ENCODE measurements at regions of chr19 and their contacts with region 1.

Region 1: GRCh38 chr19:2578901-2579677 is 103.2 kb downstream of the GADD45B start:
- DNase-seq: peak; percentile 87
- H3K4me3 Mint-ChIP-seq: peak overlapping the region; percentile 60
- H3K27ac Mint-ChIP-seq: peak overlapping the region; percentile 23
- H3K4me1 Mint-ChIP-seq: peaks cover 22% of the 10 kb centered on the region
- H3K27me3 Mint-ChIP-seq: peaks cover 4% of the 10 kb centered on the region
- CTCF ChIP-seq: peak; percentile 78

Region 2: GRCh38 chr19:2294611-2295335 is 284.3 kb before region 1 on chr19:
- CTCF ChIA-PET with region 1: no interaction called
- intact Hi-C with region 1: no loop called
- DNase-seq: no peak
- H3K4me3 Mint-ChIP-seq: no peak overlapping the region
- H3K27ac Mint-ChIP-seq: no peak overlapping the region
- H3K4me1 Mint-ChIP-seq: no peaks in the 10 kb centered on the region
- H3K27me3 Mint-ChIP-seq: peaks cover 40% of the 10 kb centered on the region
- CTCF ChIP-seq: no peak

Region 3: GRCh38 chr19:2475702-2476450 is 103.2 kb before region 1 on chr19 and contains the start of gene GADD45B:
- CTCF ChIA-PET with region 1: interaction called, 61 read pairs
- intact Hi-C with region 1: loop called (anchors 1 kb)
- DNase-seq: peak; percentile 95
- H3K4me3 Mint-ChIP-seq: peak within 1 kb of the TSS; percentile 95
- H3K27ac Mint-ChIP-seq: peak within 1 kb of the TSS; percentile 93
- H3K4me1 Mint-ChIP-seq: peaks cover 9% of the 10 kb centered on the region
- H3K27me3 Mint-ChIP-seq: peaks cover 11% of the 10 kb centered on the region
- CTCF ChIP-seq: no peak
- total RNA-seq, gene GADD45B: 26.3 and 36.5 TPM in 2 replicates

Region 4: GRCh38 chr19:2543463-2544442 is 35.3 kb before region 1 on chr19:
- CTCF ChIA-PET with region 1: interaction called, 12 read pairs
- intact Hi-C with region 1: loop called (anchors 5 kb)
- DNase-seq: peak; percentile 88
- H3K4me3 Mint-ChIP-seq: peak overlapping the region; percentile 16
- H3K27ac Mint-ChIP-seq: peak overlapping the region; percentile 80
- H3K4me1 Mint-ChIP-seq: peaks cover 37% of the 10 kb centered on the region
- H3K27me3 Mint-ChIP-seq: no peaks in the 10 kb centered on the region
- CTCF ChIP-seq: no peak

Region 5: GRCh38 chr19:2610637-2611482 is 31.8 kb after region 1 on chr19:
- CTCF ChIA-PET with region 1: interaction called, 14 read pairs
- intact Hi-C with region 1: loop called (anchors 1 kb)
- DNase-seq: peak; percentile 93
- H3K4me3 Mint-ChIP-seq: peak overlapping the region; percentile 62
- H3K27ac Mint-ChIP-seq: no peak overlapping the region
- H3K4me1 Mint-ChIP-seq: no peaks in the 10 kb centered on the region
- H3K27me3 Mint-ChIP-seq: no peaks in the 10 kb centered on the region
- CTCF ChIP-seq: peak; percentile 83